Activated CD4-positive, alpha-beta T cell treated with anti-CD3 and anti-CD28 coated beads for 36 hours (primary cell): ENCODE measurements at regions of chr20 and their contacts with region 1.

Region 1: GRCh38 chr20:59165891-59166709 is 2.5 kb downstream of the ZNF831 start:
- DNase-seq: peak; percentile 62
- ATAC-seq: peak; percentile 69
- H3K4me3 Mint-ChIP-seq: peak overlapping the region; percentile 76
- H3K27ac Mint-ChIP-seq: peak overlapping the region; percentile 94
- H3K4me1 Mint-ChIP-seq: peaks cover 89% of the 10 kb centered on the region
- H3K27me3 Mint-ChIP-seq: no peaks in the 10 kb centered on the region

Region 2: DNA sequence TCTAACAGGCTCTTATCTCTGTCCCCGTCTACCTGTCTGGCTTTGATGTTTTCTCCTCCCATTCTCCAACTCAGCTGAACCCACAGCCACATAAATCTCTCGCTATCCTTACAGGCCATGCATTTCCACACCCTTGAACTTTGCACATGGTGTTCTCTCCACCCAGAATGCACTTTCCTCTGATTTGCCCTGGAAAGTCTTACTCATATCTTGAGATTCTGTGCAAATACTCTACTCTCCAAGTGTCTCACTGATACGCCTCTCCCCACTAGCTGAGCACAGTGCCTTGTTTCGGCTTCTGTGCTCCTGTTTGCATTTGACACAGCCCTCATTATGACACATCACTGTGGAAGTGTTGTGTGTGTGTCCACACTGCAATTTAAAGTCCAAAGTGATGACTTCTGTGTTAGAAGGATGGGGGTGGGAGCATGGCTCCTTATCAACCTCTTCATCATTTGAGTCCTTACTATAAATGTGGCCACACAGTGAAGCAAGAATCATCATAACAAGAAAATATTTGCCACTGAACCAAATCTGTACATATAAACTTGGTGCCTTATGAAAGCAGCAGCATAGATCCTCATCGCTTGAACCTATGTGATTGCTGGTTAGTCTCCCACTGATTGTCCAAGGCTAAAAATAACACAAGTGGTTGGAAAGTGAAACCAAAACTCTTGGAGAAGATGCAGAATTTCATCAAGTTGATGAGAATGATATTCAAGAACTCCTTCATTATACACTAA is 118.0 kb before region 1 on chr20:
- CTCF ChIA-PET with region 1: interaction called, 5 read pairs
- POLR2A ChIA-PET with region 1: no interaction called
- intact Hi-C with region 1: loop called in 1 of 2 experiments (anchors 2 kb)
- DNase-seq: peak; percentile 59
- ATAC-seq: peak; percentile 90
- H3K4me3 Mint-ChIP-seq: no peak overlapping the region
- H3K27ac Mint-ChIP-seq: peak overlapping the region; percentile 44
- H3K4me1 Mint-ChIP-seq: peaks cover 27% of the 10 kb centered on the region
- H3K27me3 Mint-ChIP-seq: peaks cover 1% of the 10 kb centered on the region

Region 3: DNA sequence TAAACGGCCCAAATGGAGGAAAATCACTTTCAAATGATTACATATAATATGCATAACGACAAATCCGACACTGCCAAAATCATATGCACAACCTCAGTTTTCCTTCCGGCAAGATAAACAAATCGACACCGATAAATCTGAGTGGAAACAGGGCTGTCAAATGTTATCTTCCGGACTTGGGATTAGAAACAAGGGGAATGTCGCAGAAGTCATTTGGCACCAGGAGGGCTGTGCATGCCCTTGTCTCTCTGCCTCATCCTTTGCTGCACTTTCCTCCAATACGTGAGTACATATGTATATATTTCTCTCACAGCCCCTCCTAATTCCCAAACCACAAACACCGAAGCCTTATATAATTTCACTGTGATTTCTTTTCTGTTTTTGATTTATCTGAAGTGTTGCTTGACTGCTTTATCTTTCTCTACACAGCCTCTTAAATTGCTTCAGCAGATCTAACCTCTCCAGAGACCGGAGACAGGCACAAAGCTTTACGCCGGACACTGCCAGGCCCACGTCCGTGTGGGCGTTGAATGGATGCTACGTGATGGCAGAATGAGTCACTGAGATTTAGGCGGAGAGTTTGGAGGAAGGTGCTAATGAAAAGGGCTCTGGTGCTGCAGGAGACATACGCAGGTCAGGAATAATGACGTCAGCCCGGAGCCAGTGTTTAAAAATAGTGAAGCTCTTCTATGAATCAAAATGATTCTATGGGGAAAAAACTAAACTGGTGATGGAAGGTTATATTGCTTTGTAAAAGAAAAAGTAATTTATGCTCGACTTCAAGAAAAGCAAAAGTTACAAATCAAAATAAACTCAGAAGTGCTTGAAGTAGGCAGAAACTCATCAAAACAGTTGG is 102.5 kb before region 1 on chr20:
- CTCF ChIA-PET with region 1: no interaction called
- POLR2A ChIA-PET with region 1: no interaction called
- intact Hi-C with region 1: no loop called
- DNase-seq: no peak
- ATAC-seq: no peak
- H3K4me3 Mint-ChIP-seq: no peak overlapping the region
- H3K27ac Mint-ChIP-seq: no peak overlapping the region
- H3K4me1 Mint-ChIP-seq: no peaks in the 10 kb centered on the region
- H3K27me3 Mint-ChIP-seq: peaks cover 3% of the 10 kb centered on the region

Region 4: GRCh38 chr20:59120491-59120890 is 45.6 kb before region 1 on chr20:
- CTCF ChIA-PET with region 1: no interaction called
- POLR2A ChIA-PET with region 1: no interaction called
- intact Hi-C with region 1: loop called in 1 of 2 experiments (anchors 1 kb)
- DNase-seq: peak; percentile 43
- ATAC-seq: peak; percentile 10
- H3K4me3 Mint-ChIP-seq: peak overlapping the region; percentile 22
- H3K27ac Mint-ChIP-seq: peak overlapping the region; percentile 71
- H3K4me1 Mint-ChIP-seq: peaks cover 78% of the 10 kb centered on the region
- H3K27me3 Mint-ChIP-seq: no peaks in the 10 kb centered on the region

Region 5: GRCh38 chr20:59149651-59150504 is 16.2 kb before region 1 on chr20:
- CTCF ChIA-PET with region 1: interaction called, 45 read pairs
- POLR2A ChIA-PET with region 1: interaction called, 21 read pairs
- intact Hi-C with region 1: loop called (anchors 1 kb)
- DNase-seq: peak; percentile 82
- ATAC-seq: peak; percentile 42
- H3K4me3 Mint-ChIP-seq: peak overlapping the region; percentile 58
- H3K27ac Mint-ChIP-seq: peak overlapping the region; percentile 95
- H3K4me1 Mint-ChIP-seq: peaks cover 96% of the 10 kb centered on the region
- H3K27me3 Mint-ChIP-seq: no peaks in the 10 kb centered on the region

Region 6: DNA sequence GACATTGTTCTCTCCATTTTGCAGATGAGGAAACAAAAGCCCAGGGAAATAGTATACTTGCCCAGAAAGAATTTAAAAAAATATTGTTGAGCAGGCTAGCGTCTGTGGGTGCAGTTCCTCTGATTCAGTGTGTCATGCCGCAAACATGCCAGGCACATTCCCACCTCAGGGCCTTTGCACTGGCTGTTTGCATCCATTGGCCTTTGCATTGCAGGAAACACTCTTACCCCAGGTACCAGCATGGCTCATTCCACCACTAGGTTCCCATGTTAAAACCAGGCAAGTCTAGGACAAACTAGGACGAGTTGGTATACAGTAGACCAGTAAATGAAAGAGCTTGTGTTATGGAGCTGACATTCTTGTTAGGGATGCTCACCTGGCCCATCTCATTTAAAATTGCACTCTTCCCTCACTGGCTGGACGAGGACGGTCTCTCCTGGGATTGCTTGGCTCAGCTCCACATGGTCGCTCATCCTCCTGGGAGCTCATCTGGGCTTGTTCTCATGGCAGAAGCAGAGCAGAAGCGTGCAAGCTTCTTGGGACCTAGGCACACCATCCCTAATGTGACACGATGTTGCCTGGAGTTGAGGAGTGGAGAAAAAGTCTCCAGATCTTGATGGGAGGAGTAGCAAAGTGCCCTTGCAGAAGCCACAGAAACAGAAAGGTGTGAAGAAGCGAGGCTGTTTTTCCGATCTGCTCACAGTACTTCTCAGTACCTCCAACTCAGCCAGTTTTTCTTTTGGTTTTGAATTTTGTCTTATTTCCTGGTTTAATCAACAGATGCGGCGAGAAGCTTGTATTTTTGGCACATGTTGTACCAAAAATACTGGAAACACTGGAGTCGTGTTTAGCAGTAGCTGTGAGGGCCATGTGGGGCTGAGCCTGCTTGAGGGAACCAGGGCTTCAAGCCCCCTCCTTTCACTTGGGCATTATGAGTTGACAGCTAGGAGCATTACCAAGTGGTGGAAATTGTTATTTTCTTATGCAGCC is 11.5 kb after region 1 on chr20:
- CTCF ChIA-PET with region 1: interaction called, 8 read pairs
- POLR2A ChIA-PET with region 1: interaction called, 5 read pairs
- intact Hi-C with region 1: loop called (anchors 1 kb)
- DNase-seq: peak; percentile 69
- ATAC-seq: peak; percentile 88
- H3K4me3 Mint-ChIP-seq: peak overlapping the region; percentile 55
- H3K27ac Mint-ChIP-seq: peak overlapping the region; percentile 85
- H3K4me1 Mint-ChIP-seq: peaks cover 84% of the 10 kb centered on the region
- H3K27me3 Mint-ChIP-seq: no peaks in the 10 kb centered on the region